CD4-positive, alpha-beta T cell (primary cell): ENCODE measurements at regions of chr4 and their contacts with region 1.

Region 1: DNA sequence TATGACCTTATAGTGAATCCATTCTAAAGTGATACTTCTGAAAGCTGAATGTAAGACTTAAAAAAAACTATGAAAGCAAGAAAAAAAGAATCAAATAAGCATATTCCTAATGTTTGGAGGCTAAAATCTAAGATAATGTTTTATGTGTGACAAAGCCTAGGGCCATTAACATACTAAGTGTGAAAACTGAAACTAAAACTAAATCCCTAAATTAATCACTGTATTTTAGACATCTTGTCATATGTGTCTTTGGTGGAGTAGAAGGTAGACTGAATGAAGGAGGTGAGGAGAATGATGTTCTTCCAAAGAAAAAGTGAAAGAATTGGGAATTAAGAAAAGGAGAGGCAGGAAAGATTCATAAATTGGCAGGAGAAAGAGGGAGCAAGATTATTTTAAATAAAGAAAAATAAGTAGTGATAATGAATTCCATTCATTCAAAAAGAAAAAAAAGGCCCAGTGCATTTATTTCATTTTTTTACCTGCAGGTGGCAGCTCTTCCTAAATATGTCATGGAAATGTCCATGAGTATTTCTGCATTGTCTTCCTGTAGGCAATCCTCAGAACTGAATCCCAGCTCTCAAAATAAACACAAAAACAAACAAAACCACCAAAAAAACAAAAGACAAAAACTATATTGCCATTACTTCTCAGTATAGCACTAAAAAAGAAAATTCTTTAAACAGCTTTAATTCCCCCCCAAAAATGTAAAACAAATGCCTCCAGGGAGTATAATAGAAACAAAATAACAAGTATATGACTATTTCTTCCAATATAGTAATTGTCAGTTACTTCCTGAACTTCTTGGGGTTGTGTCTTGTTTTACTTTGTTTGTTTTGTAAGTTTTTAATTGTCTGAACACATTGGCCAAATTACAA is 17.0 kb upstream of the AP1AR start:
- DNase-seq: peak in 3 of 14 experiments; percentile 48 to 51 (median 49)
- ATAC-seq: no peak
- H3K4me3 ChIP-seq: no peak overlapping the region
- H3K4me3 Mint-ChIP-seq: no peak overlapping the region
- H3K27ac ChIP-seq: no peak overlapping the region
- H3K27ac Mint-ChIP-seq: no peak overlapping the region
- H3K4me1 ChIP-seq: no peaks in the 10 kb centered on the region
- H3K4me1 Mint-ChIP-seq: no peaks in the 10 kb centered on the region
- H3K27me3 ChIP-seq: no peaks in the 10 kb centered on the region
- H3K27me3 Mint-ChIP-seq: no peaks in the 10 kb centered on the region
- CTCF ChIP-seq: peak; percentile 69

Region 2: DNA sequence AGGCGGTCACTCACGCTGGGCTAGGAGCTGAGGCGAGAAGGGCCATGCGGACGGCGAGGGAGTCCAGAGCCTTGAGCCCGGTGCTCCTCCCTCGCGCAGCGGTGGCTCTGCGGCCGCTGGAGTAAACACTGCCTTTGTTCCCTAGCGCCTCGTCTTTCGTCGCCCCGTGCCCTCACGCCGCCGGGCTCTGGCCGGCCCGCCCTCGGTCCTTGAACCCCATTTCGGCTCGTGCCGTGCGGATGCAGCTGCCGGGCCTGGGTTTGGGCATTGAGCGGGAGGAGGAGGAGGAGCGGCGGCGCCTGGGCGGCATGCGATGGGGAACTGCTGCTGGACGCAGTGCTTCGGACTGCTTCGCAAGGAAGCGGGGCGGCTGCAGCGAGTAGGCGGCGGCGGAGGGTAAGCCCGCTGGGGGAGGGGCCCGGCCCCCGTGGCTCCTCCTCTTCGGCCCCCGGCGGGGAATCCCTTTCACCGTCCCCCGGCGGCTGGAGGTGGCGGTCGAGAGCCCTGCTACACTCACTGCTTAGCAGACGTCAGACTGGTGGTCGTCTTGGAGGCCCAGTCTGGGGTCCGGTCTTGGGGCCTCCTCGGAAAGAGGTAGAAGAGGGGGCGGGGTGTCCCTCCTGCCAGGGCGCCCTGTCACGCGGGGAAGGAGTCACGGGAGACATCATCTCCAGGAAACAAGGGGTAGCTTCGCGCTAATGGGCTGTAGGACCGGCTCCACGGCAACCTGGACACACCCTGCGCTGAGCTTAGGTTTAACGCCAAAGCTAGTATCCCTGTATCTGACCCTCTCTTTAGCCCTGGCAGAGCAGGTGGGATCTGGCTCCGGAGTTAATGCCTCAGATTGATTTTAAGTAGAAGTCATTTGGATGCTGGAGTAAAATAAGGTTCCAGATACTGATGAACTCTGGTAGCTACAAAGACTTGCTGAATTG is 17.4 kb after region 1 on chr4 and contains the start of gene AP1AR:
- CTCF ChIA-PET with region 1: interaction called, 11 read pairs
- POLR2A ChIA-PET with region 1: interaction called, 4 read pairs
- intact Hi-C with region 1: loop called (anchors 1 to 2 kb)
- DNase-seq: peak; percentile 53 to 90 (median 69)
- ATAC-seq: peak; percentile 50
- H3K4me3 ChIP-seq: peak within 1 kb of the TSS; percentile 93
- H3K4me3 Mint-ChIP-seq: peak within 1 kb of the TSS; percentile 99
- H3K27ac ChIP-seq: peak within 1 kb of the TSS; percentile 93 to 96
- H3K27ac Mint-ChIP-seq: peak within 1 kb of the TSS; percentile 98
- H3K4me1 ChIP-seq: peaks cover 13% of the 10 kb centered on the region
- H3K4me1 Mint-ChIP-seq: peaks cover 55% of the 10 kb centered on the region
- H3K27me3 ChIP-seq: no peaks in the 10 kb centered on the region
- H3K27me3 Mint-ChIP-seq: no peaks in the 10 kb centered on the region
- CTCF ChIP-seq: no peak
- total RNA-seq, gene AP1AR: 3.7 to 4.8 TPM

Region 3: GRCh38 chr4:112523764-112524505 is 309.3 kb after region 1 on chr4:
- CTCF ChIA-PET with region 1: interaction called, 3 read pairs
- POLR2A ChIA-PET with region 1: no interaction called
- intact Hi-C with region 1: loop called (anchors 1 kb)
- DNase-seq: peak; percentile 49 to 83 (median 70)
- ATAC-seq: peak; percentile 82
- H3K4me3 ChIP-seq: peak overlapping the region; percentile 51
- H3K4me3 Mint-ChIP-seq: peak overlapping the region; percentile 89
- H3K27ac ChIP-seq: no peak overlapping the region
- H3K27ac Mint-ChIP-seq: no peak overlapping the region
- H3K4me1 ChIP-seq: peaks cover 35% of the 10 kb centered on the region
- H3K4me1 Mint-ChIP-seq: peaks cover 51% of the 10 kb centered on the region
- H3K27me3 ChIP-seq: peaks cover 50 to 51% of the 10 kb centered on the region in 2 experiments
- H3K27me3 Mint-ChIP-seq: peaks cover 78% of the 10 kb centered on the region
- CTCF ChIP-seq: peak; percentile 74

Region 4: GRCh38 chr4:112604589-112604988 is 390.0 kb after region 1 on chr4:
- CTCF ChIA-PET with region 1: no interaction called
- POLR2A ChIA-PET with region 1: no interaction called
- intact Hi-C with region 1: loop called (anchors 2 to 10 kb)
- DNase-seq: peak in 12 of 14 experiments; percentile 4 to 65 (median 12)
- ATAC-seq: peak; percentile 63
- H3K4me3 ChIP-seq: no peak overlapping the region
- H3K4me3 Mint-ChIP-seq: no peak overlapping the region
- H3K27ac ChIP-seq: no peak overlapping the region
- H3K27ac Mint-ChIP-seq: no peak overlapping the region
- H3K4me1 ChIP-seq: no peaks in the 10 kb centered on the region
- H3K4me1 Mint-ChIP-seq: peaks cover 4% of the 10 kb centered on the region
- H3K27me3 ChIP-seq: no peaks in the 10 kb centered on the region
- H3K27me3 Mint-ChIP-seq: no peaks in the 10 kb centered on the region
- CTCF ChIP-seq: peak; percentile 66

Region 5: DNA sequence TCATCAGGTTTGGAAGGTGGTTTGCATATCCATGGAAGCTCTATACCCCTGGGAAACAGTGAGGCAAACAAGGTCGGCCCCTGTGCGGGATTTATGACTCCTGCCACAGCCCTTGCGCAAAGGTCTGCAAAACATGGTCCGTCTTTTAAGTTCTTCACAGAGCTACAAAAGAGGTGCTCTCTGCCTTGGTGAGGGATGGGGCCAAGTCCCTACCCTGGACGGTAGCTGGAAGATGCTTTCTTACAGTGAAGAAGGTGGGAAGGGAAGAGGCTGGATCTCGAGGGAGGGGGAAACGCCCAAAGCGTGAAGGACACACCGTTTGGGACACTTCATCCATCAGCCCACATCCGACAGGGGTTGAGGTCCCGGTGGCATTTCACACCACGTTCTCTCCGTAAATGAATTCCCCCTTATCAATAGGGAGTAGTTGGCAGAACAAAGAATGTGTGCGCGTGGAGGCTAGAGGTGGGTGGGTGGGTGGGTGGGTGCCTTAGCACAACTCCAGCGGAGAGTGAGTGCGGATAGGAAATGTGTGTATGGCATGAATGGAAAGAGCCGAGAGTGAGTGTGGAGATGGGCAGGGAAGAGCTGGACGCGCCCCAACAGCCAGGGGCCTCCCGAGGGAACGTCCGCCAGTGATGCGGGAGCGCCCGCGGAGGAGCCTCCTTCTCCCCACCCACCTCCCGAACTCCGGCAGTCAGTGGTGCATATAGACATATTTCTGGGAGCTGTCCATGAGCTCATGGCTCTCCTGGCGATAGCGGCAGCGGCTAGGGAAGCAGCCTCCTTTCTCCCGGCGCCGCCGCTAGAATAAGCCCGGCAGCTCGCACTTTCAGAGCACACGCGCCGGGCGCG is 490.6 kb after region 1 on chr4:
- CTCF ChIA-PET with region 1: no interaction called
- POLR2A ChIA-PET with region 1: no interaction called
- intact Hi-C with region 1: no loop called
- DNase-seq: peak in 3 of 14 experiments; percentile 4 to 29 (median 20)
- ATAC-seq: no peak
- H3K4me3 ChIP-seq: peak overlapping the region; percentile 43
- H3K4me3 Mint-ChIP-seq: peak overlapping the region; percentile 89
- H3K27ac ChIP-seq: no peak overlapping the region
- H3K27ac Mint-ChIP-seq: no peak overlapping the region
- H3K4me1 ChIP-seq: peaks cover 18% of the 10 kb centered on the region
- H3K4me1 Mint-ChIP-seq: peaks cover 21% of the 10 kb centered on the region
- H3K27me3 ChIP-seq: peaks cover 23 to 39% of the 10 kb centered on the region in 2 experiments
- H3K27me3 Mint-ChIP-seq: peaks cover 53% of the 10 kb centered on the region
- CTCF ChIP-seq: no peak